ENCODE measurements at regions of chr1 and their contacts with region 1.

Region 1: DNA sequence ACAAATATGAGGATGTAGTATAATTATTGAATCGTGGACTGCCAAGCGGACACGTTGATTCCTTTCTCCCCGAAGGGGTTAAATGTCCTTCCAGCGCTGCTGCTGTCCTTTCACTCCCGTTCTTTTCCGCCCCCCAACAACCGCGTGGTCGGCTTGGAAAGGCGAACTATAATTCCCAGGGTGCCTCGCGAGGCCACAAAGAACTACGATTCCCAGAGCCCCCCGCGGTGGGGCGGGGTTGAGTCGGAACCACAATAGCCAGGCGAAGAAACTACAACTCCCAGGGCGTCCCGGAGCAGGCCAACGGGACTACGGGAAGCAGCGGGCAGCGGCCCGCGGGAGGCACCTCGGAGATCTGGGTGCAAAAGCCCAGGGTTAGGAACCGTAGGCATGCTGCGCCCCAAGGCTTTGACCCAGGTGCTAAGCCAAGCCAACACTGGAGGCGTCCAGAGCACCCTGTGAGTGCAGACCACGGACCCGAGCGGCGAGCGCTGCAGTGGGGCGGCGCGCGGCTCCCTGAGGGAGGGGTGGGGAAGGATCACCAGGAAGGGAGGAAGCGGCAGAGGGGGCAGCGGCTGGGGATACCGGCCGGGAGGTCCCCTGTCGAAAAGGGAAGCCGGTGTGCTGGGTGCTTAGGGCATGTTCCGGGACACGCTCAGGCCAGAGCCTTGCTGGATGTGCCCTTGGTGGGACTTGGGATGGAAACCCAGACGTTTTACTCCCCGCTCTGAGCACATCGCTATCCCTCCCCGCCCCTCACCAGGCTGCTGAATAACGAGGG is at the start of gene LAMTOR2:
- DNase-seq: peak; percentile 99
- ATAC-seq: peak; percentile 69
- H3K4me3 Mint-ChIP-seq: peak within 1 kb of the TSS; percentile 98
- H3K27ac Mint-ChIP-seq: peak within 1 kb of the TSS; percentile 97
- H3K4me1 Mint-ChIP-seq: peaks cover 15% of the 10 kb centered on the region
- H3K27me3 Mint-ChIP-seq: no peaks in the 10 kb centered on the region
- CTCF ChIP-seq: no peak
- total RNA-seq, gene LAMTOR2: 62.4 to 75.7 TPM (median 73.8 TPM) in 3 replicates

Region 2: GRCh38 chr1:156076501-156077429 is 22.1 kb after region 1 on chr1:
- CTCF ChIA-PET with region 1: interaction called, 16 read pairs
- POLR2A ChIA-PET with region 1: interaction called, 3 read pairs
- DNase-seq: peak; percentile 65
- ATAC-seq: peak; percentile 21
- H3K4me3 Mint-ChIP-seq: peak overlapping the region; percentile 96
- H3K27ac Mint-ChIP-seq: peak overlapping the region; percentile 53
- H3K4me1 Mint-ChIP-seq: peaks cover 80% of the 10 kb centered on the region
- H3K27me3 Mint-ChIP-seq: no peaks in the 10 kb centered on the region
- CTCF ChIP-seq: no peak